ENCODE measurements at regions of chr18 and their contacts with region 1.

Region 1: GRCh38 chr18:4319738-4320677 is 135.1 kb downstream of the DLGAP1 start:
- DNase-seq: no peak
- H3K4me3 ChIP-seq: no peak overlapping the region
- H3K27ac ChIP-seq: no peak overlapping the region
- H3K4me1 ChIP-seq: no peaks in the 10 kb centered on the region
- H3K27me3 ChIP-seq: no peaks in the 10 kb centered on the region
- CTCF ChIP-seq: no peak
- EP300 ChIP-seq: no peak
- POLR2A ChIP-seq: no peak

Region 2: DNA sequence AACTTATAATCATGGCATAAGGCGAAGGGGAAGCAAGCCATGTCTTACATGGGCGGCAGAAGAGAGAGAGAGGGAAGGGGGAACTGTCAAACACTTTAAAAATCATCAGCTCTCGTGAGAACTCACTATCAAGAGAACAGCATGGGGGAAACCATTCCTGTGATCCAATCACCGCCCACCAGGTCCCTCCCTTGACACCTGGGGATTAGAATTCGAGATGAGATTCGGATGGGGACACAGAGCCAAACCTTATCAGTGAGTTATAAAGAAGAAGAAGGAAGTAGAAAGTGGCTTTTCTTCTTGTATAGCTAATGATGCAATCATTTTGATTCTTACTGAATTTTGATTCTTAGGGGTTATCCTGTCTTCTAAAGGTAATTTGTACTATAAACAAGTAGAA is 1613.1 kb before region 1 on chr18:
- in situ Hi-C with region 1: no loop called
- intact Hi-C with region 1: no loop called
- DNase-seq: no peak
- H3K4me3 ChIP-seq: no peak overlapping the region
- H3K27ac ChIP-seq: no peak overlapping the region
- H3K4me1 ChIP-seq: no peaks in the 10 kb centered on the region
- H3K27me3 ChIP-seq: no peaks in the 10 kb centered on the region
- CTCF ChIP-seq: no peak
- EP300 ChIP-seq: no peak
- POLR2A ChIP-seq: no peak

Region 3: GRCh38 chr18:4084382-4084900 is 235.6 kb before region 1 on chr18:
- in situ Hi-C with region 1: no loop called
- intact Hi-C with region 1: no loop called
- DNase-seq: no peak
- H3K4me3 ChIP-seq: no peak overlapping the region
- H3K27ac ChIP-seq: no peak overlapping the region
- H3K4me1 ChIP-seq: no peaks in the 10 kb centered on the region
- H3K27me3 ChIP-seq: no peaks in the 10 kb centered on the region
- CTCF ChIP-seq: no peak
- EP300 ChIP-seq: no peak
- POLR2A ChIP-seq: no peak

Region 4: GRCh38 chr18:4203568-4204437 is 116.2 kb before region 1 on chr18:
- in situ Hi-C with region 1: loop called in 1 of 4 experiments (anchors 25 kb)
- intact Hi-C with region 1: no loop called
- DNase-seq: no peak
- H3K4me3 ChIP-seq: no peak overlapping the region
- H3K27ac ChIP-seq: no peak overlapping the region
- H3K4me1 ChIP-seq: no peaks in the 10 kb centered on the region
- H3K27me3 ChIP-seq: no peaks in the 10 kb centered on the region
- CTCF ChIP-seq: no peak
- EP300 ChIP-seq: no peak
- POLR2A ChIP-seq: no peak

Region 5: DNA sequence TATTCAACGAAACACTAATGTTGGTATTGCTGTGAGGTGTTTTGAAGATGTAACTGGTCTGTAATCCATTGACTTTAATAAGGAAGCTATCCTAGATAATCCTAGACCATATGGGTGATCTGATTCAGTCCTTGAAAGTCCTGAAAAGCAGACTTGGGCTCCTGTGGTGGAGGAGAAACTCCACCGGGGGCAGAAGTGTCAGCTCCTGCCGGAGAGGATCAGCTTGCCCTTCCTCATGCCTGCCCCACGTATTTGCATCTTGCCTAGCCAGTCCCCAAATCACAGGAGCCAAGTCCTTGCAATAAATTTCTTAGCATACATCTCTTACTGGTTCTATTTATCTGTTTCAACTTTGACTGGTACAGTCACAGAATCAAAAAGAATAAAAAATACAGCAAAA is 279.3 kb after region 1 on chr18:
- in situ Hi-C with region 1: no loop called
- intact Hi-C with region 1: no loop called
- DNase-seq: no peak
- H3K4me3 ChIP-seq: no peak overlapping the region
- H3K27ac ChIP-seq: no peak overlapping the region
- H3K4me1 ChIP-seq: no peaks in the 10 kb centered on the region
- H3K27me3 ChIP-seq: no peaks in the 10 kb centered on the region
- CTCF ChIP-seq: no peak
- EP300 ChIP-seq: no peak
- POLR2A ChIP-seq: no peak